Activated B cell treated with CpG ODN at 0.5 μM for 24 hours (primary cell): ENCODE measurements at regions of chr2 and their contacts with region 1.

Region 1: GRCh38 chr2:20225294-20226151 is 593 bp upstream of the SDC1 start:
- DNase-seq: peak; percentile 33
- ATAC-seq: peak; percentile 62
- H3K4me3 Mint-ChIP-seq: peak overlapping the region; percentile 66
- H3K27ac Mint-ChIP-seq: no peak overlapping the region
- H3K4me1 Mint-ChIP-seq: peaks cover 12% of the 10 kb centered on the region
- H3K27me3 Mint-ChIP-seq: peaks cover 45% of the 10 kb centered on the region
- CTCF ChIP-seq: no peak

Region 2: GRCh38 chr2:19989681-19990415 is 235.7 kb before region 1 on chr2 and contains the start of gene WDR35:
- CTCF ChIA-PET with region 1: no interaction called
- POLR2A ChIA-PET with region 1: no interaction called
- intact Hi-C with region 1: loop called (anchors 10 kb)
- DNase-seq: peak; percentile 93
- ATAC-seq: peak; percentile 89
- H3K4me3 Mint-ChIP-seq: peak within 1 kb of the TSS; percentile 91
- H3K27ac Mint-ChIP-seq: peak within 1 kb of the TSS; percentile 85
- H3K4me1 Mint-ChIP-seq: peaks cover 31% of the 10 kb centered on the region
- H3K27me3 Mint-ChIP-seq: peaks cover 18% of the 10 kb centered on the region
- CTCF ChIP-seq: no peak
- total RNA-seq, gene WDR35: 8.1 and 8.2 TPM in 2 replicates

Region 3: DNA sequence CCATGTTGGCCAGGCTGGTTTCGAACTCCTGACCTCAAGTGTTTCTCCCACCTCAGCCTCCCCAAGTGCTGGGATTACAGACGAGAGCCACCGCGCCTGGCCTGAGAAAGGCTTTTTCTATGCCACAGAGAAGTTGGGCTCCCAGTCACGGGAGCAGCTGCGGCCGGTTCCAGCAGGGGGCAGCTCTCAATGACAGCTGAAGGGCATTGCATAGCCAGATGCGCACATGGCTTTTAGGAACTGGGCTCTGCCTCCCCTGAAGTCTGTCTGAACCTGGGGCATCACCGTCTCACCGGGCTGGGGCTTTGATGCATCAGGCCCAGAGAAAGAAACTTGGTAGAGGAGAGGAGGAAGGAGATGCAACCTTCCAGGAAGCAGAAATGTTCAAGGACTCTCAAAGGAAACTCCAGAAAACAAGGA is 89.9 kb before region 1 on chr2:
- CTCF ChIA-PET with region 1: no interaction called
- POLR2A ChIA-PET with region 1: no interaction called
- intact Hi-C with region 1: loop called (anchors 1 kb)
- DNase-seq: peak; percentile 23
- ATAC-seq: peak; percentile 56
- H3K4me3 Mint-ChIP-seq: no peak overlapping the region
- H3K27ac Mint-ChIP-seq: no peak overlapping the region
- H3K4me1 Mint-ChIP-seq: no peaks in the 10 kb centered on the region
- H3K27me3 Mint-ChIP-seq: peaks cover 15% of the 10 kb centered on the region
- CTCF ChIP-seq: no peak

Region 4: DNA sequence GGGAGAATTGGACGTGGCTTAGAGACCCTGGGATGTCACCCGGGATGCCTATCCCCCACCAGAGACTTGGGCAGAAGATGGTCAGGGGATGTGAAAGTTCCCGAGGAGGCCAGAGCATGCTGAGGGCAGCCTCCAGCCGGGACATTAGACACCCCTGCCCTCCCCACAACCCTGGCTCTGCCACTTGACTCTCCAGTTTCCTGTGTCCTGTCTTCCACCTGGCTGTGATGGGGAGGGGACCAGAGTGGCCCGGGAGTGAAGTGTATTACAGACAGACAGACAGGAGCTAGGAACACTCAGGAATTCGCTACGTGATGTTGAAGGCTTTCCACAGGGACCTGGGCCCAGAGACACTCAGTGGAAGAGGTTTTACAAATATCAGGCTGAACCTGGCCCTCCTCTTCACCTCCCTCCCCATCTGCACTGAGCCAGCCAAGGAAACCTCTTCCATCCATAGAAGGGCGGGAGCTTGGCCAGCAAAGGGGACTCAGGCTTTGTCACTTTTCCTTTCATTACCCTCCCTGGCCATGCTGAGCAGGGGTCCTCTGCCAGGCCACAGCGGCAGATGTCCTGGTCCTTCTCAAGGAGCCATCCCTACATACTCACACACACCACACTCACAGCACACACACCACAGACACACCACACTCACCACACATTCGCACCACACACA is 61.3 kb before region 1 on chr2:
- CTCF ChIA-PET with region 1: no interaction called
- POLR2A ChIA-PET with region 1: no interaction called
- intact Hi-C with region 1: no loop called
- DNase-seq: no peak
- ATAC-seq: no peak
- H3K4me3 Mint-ChIP-seq: no peak overlapping the region
- H3K27ac Mint-ChIP-seq: no peak overlapping the region
- H3K4me1 Mint-ChIP-seq: no peaks in the 10 kb centered on the region
- H3K27me3 Mint-ChIP-seq: peaks cover 3% of the 10 kb centered on the region
- CTCF ChIP-seq: no peak

Region 5: DNA sequence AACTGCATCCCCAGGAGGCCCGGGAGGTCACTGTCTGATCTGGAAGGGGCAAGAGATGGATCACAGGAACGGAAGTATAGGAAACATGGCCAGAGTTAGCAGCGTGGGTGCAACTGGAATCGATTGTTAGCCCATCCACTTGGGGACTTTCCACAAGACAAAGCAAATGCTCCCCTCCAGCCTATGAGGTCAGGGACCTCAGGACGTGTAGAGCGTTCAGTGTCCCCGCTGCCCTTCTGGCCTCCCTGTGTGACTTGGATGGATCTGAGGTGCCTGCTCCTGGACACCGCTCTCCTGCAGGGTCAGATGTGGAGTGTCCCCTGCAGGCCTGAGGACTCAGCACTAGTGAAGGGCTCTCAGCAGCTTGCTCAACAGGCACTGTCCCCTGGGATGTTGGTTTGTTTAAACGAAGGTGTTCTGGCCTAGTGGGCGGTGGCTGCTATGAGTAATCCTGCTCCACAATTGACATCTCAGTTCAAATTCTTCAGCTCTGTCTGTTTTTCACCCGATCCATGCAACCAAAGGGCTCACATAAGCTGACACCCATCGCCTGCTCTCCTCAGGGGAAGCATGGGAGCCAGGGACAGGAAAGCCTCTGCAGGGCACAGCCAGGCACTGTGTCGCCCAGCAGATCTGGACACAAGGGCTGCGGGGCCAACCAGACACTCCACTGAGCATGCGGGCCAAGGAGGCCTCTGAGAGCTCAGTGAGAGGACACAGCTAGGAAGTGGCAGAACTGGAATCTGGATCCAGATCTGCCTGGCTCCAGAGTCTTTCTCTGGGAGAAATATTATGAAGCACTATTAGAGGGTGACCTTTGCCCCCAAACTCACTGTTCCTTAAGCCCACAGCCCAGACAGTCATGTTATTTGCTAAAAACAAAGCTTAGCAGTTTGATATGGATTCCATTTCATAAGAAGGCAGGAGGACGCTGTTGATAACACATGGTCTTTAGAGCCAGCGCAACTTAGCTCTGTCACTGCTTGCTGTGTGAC is 299.8 kb after region 1 on chr2:
- CTCF ChIA-PET with region 1: no interaction called
- POLR2A ChIA-PET with region 1: no interaction called
- intact Hi-C with region 1: no loop called
- DNase-seq: peak; percentile 40
- ATAC-seq: peak; percentile 94
- H3K4me3 Mint-ChIP-seq: peak overlapping the region; percentile 76
- H3K27ac Mint-ChIP-seq: peak overlapping the region; percentile 41
- H3K4me1 Mint-ChIP-seq: peaks cover 21% of the 10 kb centered on the region
- H3K27me3 Mint-ChIP-seq: no peaks in the 10 kb centered on the region
- CTCF ChIP-seq: no peak